Cardiac septum (tissue), 1 donor: ENCODE measurements at regions of chr5 and their contacts with region 1.

Region 1: DNA sequence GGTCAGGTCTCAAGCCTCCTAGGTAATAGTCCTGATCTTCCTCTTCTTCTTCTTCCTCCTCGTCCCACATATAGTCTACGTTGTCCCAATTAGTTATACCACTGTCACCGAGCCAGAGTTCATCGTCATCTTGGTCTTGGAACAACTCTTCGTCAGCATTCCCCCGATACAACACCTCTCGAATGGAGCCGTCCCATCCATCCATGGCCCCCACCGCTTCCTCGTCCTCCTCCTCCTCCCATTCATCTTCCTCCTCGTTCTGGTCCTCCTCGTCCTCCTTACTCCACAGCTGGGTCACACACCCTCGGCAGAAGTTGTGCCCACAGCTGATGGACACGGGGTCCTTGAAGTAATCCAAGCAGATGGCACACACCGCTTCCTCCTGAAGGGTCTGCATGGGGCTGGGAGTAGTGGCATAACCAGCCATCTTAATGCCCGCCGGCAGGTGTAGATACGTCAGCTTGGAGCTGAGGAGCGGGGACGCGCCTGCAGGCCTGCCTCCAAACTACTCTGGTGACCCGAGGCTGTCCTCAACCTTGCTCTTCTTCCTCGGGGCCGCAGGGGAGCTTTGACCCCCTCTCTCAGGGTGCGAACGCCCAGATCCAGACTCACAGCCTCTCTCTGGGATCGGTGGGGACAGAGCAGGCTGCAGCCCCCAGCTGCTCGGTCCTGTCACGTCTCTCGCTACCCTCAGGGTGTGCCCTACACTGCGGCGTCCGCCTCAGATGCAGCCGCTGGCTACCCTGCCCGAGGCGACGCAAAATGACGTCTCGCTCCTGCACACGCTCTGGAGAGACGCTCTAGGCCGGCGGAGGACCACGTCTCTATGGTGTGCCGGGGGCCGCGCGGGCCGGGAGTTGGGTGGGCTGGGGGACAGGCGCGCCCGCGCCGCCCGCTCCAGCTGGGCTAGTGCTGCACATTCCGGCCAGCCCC is at the start of gene TRIM52:
- DNase-seq: peak; percentile 97
- total RNA-seq, gene TRIM52: 9.1 TPM

Region 2: GRCh38 chr5:181151146-181151545 is 109.5 kb before region 1 on chr5:
- intact Hi-C with region 1: no loop called
- DNase-seq: no peak

Region 3: DNA sequence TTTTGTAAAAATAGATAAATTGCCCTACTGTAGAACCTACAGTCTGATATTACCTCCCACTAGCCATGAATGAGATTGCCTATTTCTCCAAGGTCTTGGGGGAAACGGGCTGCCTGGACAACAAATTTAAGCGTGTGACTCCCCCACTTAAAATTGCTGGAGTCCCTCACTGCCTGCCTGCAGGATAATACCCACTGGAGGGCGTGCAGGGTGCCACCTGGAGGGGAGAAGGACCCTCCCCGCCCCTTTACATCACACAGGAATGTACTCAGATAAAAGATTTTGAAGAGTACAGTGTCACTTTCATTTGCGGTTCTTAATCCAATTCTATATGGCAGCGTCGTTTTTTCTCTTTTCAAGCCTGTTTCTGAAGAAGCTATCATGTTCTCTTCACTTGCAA is 49.4 kb before region 1 on chr5:
- intact Hi-C with region 1: no loop called
- DNase-seq: no peak

Region 4: GRCh38 chr5:181223058-181223728 is 37.5 kb before region 1 on chr5 and contains the start of gene TRIM41:
- intact Hi-C with region 1: loop called (anchors 1 kb)
- DNase-seq: peak; percentile 99
- total RNA-seq, gene TRIM41: 33.0 TPM

Region 5: GRCh38 chr5:181243512-181244343 is 16.9 kb before region 1 on chr5 and contains the start of gene RACK1:
- intact Hi-C with region 1: loop called (anchors 2 kb)
- DNase-seq: peak; percentile 92
- total RNA-seq, gene RACK1: 557 TPM